WTC11 (cell line): ENCODE measurements at regions of chr14 and their contacts with region 1.

Region 1: DNA sequence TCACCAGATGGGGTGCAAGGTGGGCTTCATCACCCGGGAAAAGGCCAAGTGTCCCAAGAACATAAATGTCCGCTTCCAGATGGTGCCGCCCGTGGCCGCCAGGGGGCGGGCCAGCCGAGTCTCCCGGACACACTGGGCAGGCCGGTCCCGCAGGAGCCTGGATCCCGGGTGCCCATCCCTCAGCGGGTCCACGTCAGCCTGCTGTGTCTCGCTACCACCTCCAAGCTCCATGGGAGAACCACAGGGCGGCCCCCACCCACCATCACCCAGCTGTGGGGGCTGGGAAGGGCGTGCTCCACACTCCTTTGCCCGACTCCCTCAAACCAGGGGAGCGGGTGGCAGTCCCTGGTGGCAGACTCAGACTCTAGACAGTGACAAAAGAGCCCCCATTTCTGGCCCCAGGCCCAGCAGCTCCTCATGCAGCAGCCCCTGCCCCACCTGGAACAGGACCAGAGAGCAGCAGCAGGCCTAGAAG is 22.0 kb upstream of the NUDT14 start:
- DNase-seq: peak; percentile 86
- ATAC-seq: peak; percentile 60
- H3K4me3 Mint-ChIP-seq: no peak overlapping the region
- H3K27ac Mint-ChIP-seq: no peak overlapping the region
- H3K4me1 Mint-ChIP-seq: no peaks in the 10 kb centered on the region
- H3K27me3 Mint-ChIP-seq: peaks cover 11% of the 10 kb centered on the region
- CTCF ChIP-seq: peak; percentile 95

Region 2: DNA sequence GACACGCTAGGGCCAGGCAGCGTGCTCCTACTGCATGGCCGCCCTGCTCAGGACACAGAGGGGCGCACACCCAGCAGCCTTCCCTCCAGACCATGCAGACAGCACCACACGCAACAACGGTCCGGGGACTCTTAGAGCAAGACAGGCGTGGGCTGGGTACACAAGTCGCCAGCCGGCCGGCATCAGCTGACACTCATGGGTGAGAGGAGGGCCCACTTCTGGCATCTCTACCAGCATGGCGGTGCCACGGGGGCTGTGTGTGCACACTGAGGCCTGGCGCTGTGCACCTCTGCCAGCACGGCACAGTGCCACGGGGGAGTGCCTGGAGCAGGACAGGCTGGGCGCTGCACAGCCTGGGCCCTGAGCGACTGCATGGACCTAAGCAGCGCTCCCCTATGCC is 38.5 kb after region 1 on chr14:
- CTCF ChIA-PET with region 1: no interaction called
- POLR2A ChIA-PET with region 1: no interaction called
- DNase-seq: no peak
- ATAC-seq: no peak
- H3K4me3 Mint-ChIP-seq: no peak overlapping the region
- H3K27ac Mint-ChIP-seq: no peak overlapping the region
- H3K4me1 Mint-ChIP-seq: no peaks in the 10 kb centered on the region
- H3K27me3 Mint-ChIP-seq: no peaks in the 10 kb centered on the region
- CTCF ChIP-seq: no peak

Region 3: GRCh38 chr14:105294142-105294597 is 91.1 kb after region 1 on chr14:
- CTCF ChIA-PET with region 1: interaction called, 12 read pairs
- POLR2A ChIA-PET with region 1: no interaction called
- DNase-seq: no peak
- ATAC-seq: no peak
- H3K4me3 Mint-ChIP-seq: no peak overlapping the region
- H3K27ac Mint-ChIP-seq: peak overlapping the region; percentile 67
- H3K4me1 Mint-ChIP-seq: no peaks in the 10 kb centered on the region
- H3K27me3 Mint-ChIP-seq: peaks cover 6% of the 10 kb centered on the region
- CTCF ChIP-seq: no peak